CD4-positive, alpha-beta memory T cell (primary cell): ENCODE measurements at regions of chr17 and their contacts with region 1.

Region 1: DNA sequence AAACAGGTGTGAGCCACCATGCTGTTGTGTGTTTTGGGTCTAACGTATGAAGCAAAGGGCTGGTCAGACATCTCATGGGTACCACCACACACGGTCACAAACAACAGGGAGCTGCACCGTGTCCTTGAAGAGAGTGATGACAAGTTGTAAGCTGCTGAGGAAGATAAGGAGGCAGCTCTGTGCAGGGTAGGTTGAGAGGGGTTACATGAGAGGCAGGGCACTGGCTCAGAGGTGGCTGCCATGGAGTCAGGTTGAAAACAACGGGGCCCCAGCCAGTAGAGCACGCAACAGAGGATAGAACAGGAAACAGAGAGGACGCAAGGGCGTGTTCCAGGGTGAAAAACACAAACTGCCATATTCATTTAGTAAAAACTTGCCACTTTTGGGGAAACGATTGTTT is 52.2 kb downstream of the TRARG1 start:
- DNase-seq: peak in 3 of 5 donors; percentile 20 to 41 (median 26)
- H3K4me3 ChIP-seq: no peak overlapping the region
- H3K4me3 Mint-ChIP-seq: peak overlapping the region in 4 of 8 donors; percentile 19 to 53 (median 40)
- H3K27ac ChIP-seq: no peak overlapping the region
- H3K27ac Mint-ChIP-seq: peak overlapping the region in 3 of 7 donors; percentile 31 to 85 (median 46)
- H3K4me1 ChIP-seq: peaks cover 9% of the 10 kb centered on the region
- H3K4me1 Mint-ChIP-seq: peaks cover 9 to 13% (median 11%) of the 10 kb centered on the region in 4 donors
- H3K27me3 ChIP-seq: no peaks in the 10 kb centered on the region
- H3K27me3 Mint-ChIP-seq: peaks cover 0 to 2% of the 10 kb centered on the region in 2 donors

Region 2: GRCh38 chr17:846901-847843 is 484.5 kb before region 1 on chr17:
- CTCF ChIA-PET with region 1: no interaction called
- POLR2A ChIA-PET with region 1: no interaction called
- intact Hi-C with region 1: no loop called
- DNase-seq: no peak
- H3K4me3 ChIP-seq: no peak overlapping the region
- H3K4me3 Mint-ChIP-seq: peak overlapping the region in 4 of 8 donors; percentile 35 to 51 (median 45)
- H3K27ac ChIP-seq: no peak overlapping the region
- H3K27ac Mint-ChIP-seq: no peak overlapping the region
- H3K4me1 ChIP-seq: peaks cover 10% of the 10 kb centered on the region
- H3K4me1 Mint-ChIP-seq: peaks cover 5 to 17% (median 12%) of the 10 kb centered on the region in 4 donors
- H3K27me3 ChIP-seq: peaks cover 9% of the 10 kb centered on the region
- H3K27me3 Mint-ChIP-seq: peaks cover 23 to 39% of the 10 kb centered on the region in 2 donors

Region 3: GRCh38 chr17:1260086-1260769 is 71.5 kb before region 1 on chr17:
- CTCF ChIA-PET with region 1: interaction called, 48 read pairs
- POLR2A ChIA-PET with region 1: no interaction called
- intact Hi-C with region 1: no loop called
- DNase-seq: no peak
- H3K4me3 ChIP-seq: no peak overlapping the region
- H3K4me3 Mint-ChIP-seq: peak overlapping the region in 7 of 8 donors; percentile 30 to 70 (median 52)
- H3K27ac ChIP-seq: no peak overlapping the region
- H3K27ac Mint-ChIP-seq: peak overlapping the region in 2 of 7 donors; percentile 10 to 13
- H3K4me1 ChIP-seq: peaks cover 25% of the 10 kb centered on the region
- H3K4me1 Mint-ChIP-seq: peaks cover 13 to 35% (median 15%) of the 10 kb centered on the region in 4 donors
- H3K27me3 ChIP-seq: no peaks in the 10 kb centered on the region
- H3K27me3 Mint-ChIP-seq: peaks cover 0 to 3% of the 10 kb centered on the region in 2 donors

Region 4: GRCh38 chr17:1267471-1267947 is 64.2 kb before region 1 on chr17:
- CTCF ChIA-PET with region 1: interaction called, 48 read pairs
- POLR2A ChIA-PET with region 1: no interaction called
- intact Hi-C with region 1: no loop called
- DNase-seq: peak in 1 of 5 donors; percentile 12
- H3K4me3 ChIP-seq: peak overlapping the region in 1 of 2 donors; percentile 52
- H3K4me3 Mint-ChIP-seq: peak overlapping the region; percentile 73 to 85 (median 79)
- H3K27ac ChIP-seq: no peak overlapping the region
- H3K27ac Mint-ChIP-seq: peak overlapping the region; percentile 34 to 82 (median 70)
- H3K4me1 ChIP-seq: peaks cover 8% of the 10 kb centered on the region
- H3K4me1 Mint-ChIP-seq: peaks cover 0 to 15% (median 4%) of the 10 kb centered on the region in 4 donors
- H3K27me3 ChIP-seq: no peaks in the 10 kb centered on the region
- H3K27me3 Mint-ChIP-seq: peaks cover 3 to 11% of the 10 kb centered on the region in 2 donors

Region 5: DNA sequence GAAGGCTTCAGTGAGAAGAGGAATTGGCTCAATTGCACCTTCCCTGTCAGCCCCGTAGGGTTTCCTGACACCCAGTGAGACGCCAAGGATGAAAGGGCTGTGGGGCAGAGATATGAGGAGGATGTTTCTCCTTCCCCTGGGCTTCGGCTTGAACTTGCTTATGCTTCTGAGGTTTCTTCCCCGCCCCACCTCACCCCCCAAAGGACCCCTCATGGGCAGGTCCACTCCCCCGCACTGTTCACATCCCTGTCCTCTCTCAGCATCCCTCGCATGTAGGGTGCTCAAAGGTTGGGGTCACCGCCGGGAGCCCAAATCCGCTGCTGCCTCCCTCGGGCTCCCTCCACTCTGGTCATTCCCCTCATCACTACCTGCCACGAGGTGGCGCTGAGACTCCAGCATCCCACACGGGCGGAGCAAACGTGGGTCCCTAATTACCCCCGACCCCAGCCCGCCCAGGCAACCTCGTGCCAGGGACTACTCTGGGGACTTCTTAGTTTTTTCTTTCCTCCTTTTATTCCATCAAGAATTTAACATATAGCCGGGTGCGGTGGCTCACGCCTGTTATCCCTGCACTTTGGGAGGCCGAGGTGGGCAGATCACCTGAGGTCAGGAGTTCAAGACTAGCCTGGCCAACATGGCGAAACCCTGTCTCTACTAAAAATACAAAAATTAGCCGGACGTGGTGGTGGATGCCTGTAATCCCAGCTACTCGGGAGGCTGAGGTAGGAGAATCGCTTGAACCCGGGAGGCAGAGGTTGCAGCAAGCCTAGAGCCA is 55.6 kb before region 1 on chr17:
- CTCF ChIA-PET with region 1: interaction called, 21 read pairs
- POLR2A ChIA-PET with region 1: no interaction called
- intact Hi-C with region 1: no loop called
- DNase-seq: peak; percentile 60 to 72 (median 69)
- H3K4me3 ChIP-seq: no peak overlapping the region
- H3K4me3 Mint-ChIP-seq: peak overlapping the region in 4 of 8 donors; percentile 47 to 68 (median 62)
- H3K27ac ChIP-seq: no peak overlapping the region
- H3K27ac Mint-ChIP-seq: peak overlapping the region in 3 of 7 donors; percentile 13 to 88 (median 54)
- H3K4me1 ChIP-seq: peaks cover 5% of the 10 kb centered on the region
- H3K4me1 Mint-ChIP-seq: peaks cover 0 to 8% (median 4%) of the 10 kb centered on the region in 4 donors
- H3K27me3 ChIP-seq: no peaks in the 10 kb centered on the region
- H3K27me3 Mint-ChIP-seq: peaks cover 9 to 22% of the 10 kb centered on the region in 2 donors

Region 6: DNA sequence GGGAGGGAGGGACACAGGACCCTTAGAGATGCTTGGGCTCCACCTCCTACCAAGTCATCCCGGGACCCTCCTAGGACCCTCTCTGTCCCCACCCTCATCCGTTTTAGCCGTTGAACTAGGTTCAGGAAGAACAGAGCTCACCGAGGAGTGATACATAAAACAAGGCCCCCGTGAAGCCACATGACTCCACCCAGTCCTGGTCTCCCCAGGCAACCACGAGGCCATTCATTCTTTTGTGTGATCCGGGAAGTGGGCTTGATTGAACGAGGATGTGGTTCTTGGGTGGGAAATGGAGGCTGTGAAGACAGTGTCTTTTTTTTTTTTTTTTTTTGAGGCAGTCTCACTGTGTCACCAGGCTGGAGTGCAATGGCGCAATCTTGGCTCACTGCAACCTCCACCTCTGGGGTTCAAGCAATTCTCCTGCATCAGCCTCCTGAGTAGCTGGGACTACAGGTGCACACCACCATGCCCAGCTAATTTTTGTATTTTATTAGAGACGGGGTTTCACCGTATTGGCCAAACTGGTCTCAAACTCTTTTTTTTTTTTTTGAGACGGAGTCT is 37.5 kb before region 1 on chr17:
- CTCF ChIA-PET with region 1: interaction called, 6 read pairs
- POLR2A ChIA-PET with region 1: interaction called, 6 read pairs
- intact Hi-C with region 1: loop called (anchors 1 kb)
- DNase-seq: peak; percentile 93 to 97 (median 95)
- H3K4me3 ChIP-seq: peak overlapping the region in 1 of 2 donors; percentile 0
- H3K4me3 Mint-ChIP-seq: peak overlapping the region; percentile 62 to 86 (median 70)
- H3K27ac ChIP-seq: peak overlapping the region; percentile 45
- H3K27ac Mint-ChIP-seq: peak overlapping the region; percentile 85 to 96 (median 93)
- H3K4me1 ChIP-seq: peaks cover 61% of the 10 kb centered on the region
- H3K4me1 Mint-ChIP-seq: peaks cover 28 to 75% (median 51%) of the 10 kb centered on the region in 4 donors
- H3K27me3 ChIP-seq: no peaks in the 10 kb centered on the region
- H3K27me3 Mint-ChIP-seq: no peaks in the 10 kb centered on the region

Region 7: GRCh38 chr17:1384905-1385435 is 53.3 kb after region 1 on chr17:
- CTCF ChIA-PET with region 1: no interaction called
- POLR2A ChIA-PET with region 1: no interaction called
- intact Hi-C with region 1: no loop called
- DNase-seq: no peak
- H3K4me3 ChIP-seq: no peak overlapping the region
- H3K4me3 Mint-ChIP-seq: peak overlapping the region in 2 of 8 donors; percentile 43 to 52
- H3K27ac ChIP-seq: no peak overlapping the region
- H3K27ac Mint-ChIP-seq: peak overlapping the region in 4 of 7 donors; percentile 62 to 79 (median 72)
- H3K4me1 ChIP-seq: peaks cover 90% of the 10 kb centered on the region
- H3K4me1 Mint-ChIP-seq: peaks cover 34 to 80% (median 50%) of the 10 kb centered on the region in 4 donors
- H3K27me3 ChIP-seq: no peaks in the 10 kb centered on the region
- H3K27me3 Mint-ChIP-seq: no peaks in the 10 kb centered on the region

Region 8: GRCh38 chr17:1648963-1649843 is 317.5 kb after region 1 on chr17:
- CTCF ChIA-PET with region 1: no interaction called
- POLR2A ChIA-PET with region 1: no interaction called
- intact Hi-C with region 1: no loop called
- DNase-seq: peak; percentile 92 to 95 (median 93)
- H3K4me3 ChIP-seq: peak overlapping the region in 1 of 2 donors; percentile 63
- H3K4me3 Mint-ChIP-seq: peak overlapping the region; percentile 24 to 78 (median 68)
- H3K27ac ChIP-seq: peak overlapping the region; percentile 53
- H3K27ac Mint-ChIP-seq: peak overlapping the region in 3 of 7 donors; percentile 35 to 90 (median 53)
- H3K4me1 ChIP-seq: peaks cover 23% of the 10 kb centered on the region
- H3K4me1 Mint-ChIP-seq: peaks cover 6 to 20% (median 12%) of the 10 kb centered on the region in 4 donors
- H3K27me3 ChIP-seq: no peaks in the 10 kb centered on the region
- H3K27me3 Mint-ChIP-seq: no peaks in the 10 kb centered on the region